ENCODE measurements at regions of chr18 and their contacts with region 1.

Region 1: DNA sequence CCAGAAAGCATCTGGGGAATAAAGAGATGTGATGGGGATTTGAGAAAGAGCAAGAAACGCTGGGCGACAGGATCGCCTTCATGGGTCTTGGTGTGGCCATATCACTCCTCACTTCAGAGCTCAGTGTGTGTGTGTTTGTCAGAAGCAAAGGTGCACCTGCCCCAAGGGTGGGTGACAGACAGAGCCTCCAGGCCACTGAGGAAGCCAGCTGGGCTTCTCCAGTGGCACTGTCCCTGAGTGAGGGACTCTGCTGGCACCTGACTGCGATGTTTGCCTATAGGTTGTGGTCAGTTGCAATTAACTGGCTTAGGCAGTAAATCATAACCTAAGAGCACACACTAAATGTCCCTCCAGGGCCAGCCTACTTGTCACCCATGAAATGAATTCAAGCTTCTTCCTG is 23.5 kb upstream of the GNAL start:
- DNase-seq: no peak
- H3K4me3 ChIP-seq: no peak overlapping the region
- CTCF ChIP-seq: no peak

Region 2: DNA sequence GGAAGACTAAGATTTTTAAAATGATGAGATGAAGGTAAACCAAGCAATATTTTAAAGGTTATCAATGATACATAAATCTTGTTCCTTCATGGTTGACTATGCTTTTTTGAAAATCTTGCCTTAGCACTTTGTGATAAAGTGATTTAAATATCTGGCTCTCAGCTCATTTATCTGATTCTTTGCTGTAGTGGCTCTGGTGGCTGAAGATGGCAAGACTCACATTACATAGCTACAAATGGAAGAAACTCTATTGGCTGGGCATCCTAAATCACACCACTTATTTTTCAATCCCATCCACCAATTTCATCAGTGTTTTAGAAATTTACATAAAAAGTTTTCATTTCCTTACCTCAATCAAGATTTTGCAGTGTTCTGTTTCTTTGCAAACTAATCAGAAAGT is 1227.8 kb before region 1 on chr18:
- CTCF ChIA-PET with region 1: no interaction called
- POLR2A ChIA-PET with region 1: no interaction called
- DNase-seq: no peak
- H3K4me3 ChIP-seq: no peak overlapping the region
- CTCF ChIP-seq: no peak

Region 3: DNA sequence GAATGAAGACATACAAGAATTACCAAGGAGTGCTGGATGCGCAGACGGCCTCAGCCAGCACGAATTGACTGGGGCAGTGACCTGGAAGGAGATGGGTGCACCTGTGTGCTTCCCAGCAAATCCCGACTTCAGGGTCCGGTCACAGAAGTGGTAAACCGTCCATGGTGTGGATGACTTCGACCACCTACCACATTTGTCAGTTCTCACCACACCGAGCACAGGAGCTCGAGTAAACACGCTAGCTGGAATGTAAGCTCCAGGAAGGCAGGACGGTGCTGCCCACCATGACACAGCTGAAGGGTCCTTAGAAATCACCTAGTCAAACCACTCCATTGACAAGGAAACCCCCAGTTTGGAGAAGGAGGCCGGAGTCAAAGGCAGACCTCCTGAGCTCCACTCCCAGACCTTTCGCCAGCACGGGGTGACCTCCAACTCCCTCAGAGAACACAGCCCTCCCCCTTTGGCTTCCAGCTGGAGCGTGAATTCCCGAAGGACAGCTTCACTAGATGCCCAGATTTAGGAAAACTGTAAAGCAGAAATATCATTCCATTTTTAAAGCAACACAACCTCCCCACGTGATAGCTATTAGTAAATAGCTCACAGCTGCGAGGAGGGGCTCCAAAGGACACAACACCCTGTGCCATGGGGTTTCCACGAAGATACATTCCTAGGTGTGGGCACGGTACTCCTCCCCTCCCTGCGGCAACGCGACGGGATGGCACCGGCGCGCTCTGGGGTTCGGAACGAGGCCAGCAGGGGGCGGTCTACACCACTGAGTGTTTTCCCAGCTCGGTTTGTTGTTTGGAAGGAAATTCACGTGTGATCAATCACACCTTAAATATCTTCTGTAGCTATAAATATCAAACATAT is 10.6 kb before region 1 on chr18:
- CTCF ChIA-PET with region 1: interaction called, 14 read pairs
- POLR2A ChIA-PET with region 1: no interaction called
- DNase-seq: no peak
- H3K4me3 ChIP-seq: no peak overlapping the region
- CTCF ChIP-seq: peak; percentile 80

Measured in AG04449 (cell line).